ENCODE measurements at regions of chr10 and their contacts with region 1.

Region 1: DNA sequence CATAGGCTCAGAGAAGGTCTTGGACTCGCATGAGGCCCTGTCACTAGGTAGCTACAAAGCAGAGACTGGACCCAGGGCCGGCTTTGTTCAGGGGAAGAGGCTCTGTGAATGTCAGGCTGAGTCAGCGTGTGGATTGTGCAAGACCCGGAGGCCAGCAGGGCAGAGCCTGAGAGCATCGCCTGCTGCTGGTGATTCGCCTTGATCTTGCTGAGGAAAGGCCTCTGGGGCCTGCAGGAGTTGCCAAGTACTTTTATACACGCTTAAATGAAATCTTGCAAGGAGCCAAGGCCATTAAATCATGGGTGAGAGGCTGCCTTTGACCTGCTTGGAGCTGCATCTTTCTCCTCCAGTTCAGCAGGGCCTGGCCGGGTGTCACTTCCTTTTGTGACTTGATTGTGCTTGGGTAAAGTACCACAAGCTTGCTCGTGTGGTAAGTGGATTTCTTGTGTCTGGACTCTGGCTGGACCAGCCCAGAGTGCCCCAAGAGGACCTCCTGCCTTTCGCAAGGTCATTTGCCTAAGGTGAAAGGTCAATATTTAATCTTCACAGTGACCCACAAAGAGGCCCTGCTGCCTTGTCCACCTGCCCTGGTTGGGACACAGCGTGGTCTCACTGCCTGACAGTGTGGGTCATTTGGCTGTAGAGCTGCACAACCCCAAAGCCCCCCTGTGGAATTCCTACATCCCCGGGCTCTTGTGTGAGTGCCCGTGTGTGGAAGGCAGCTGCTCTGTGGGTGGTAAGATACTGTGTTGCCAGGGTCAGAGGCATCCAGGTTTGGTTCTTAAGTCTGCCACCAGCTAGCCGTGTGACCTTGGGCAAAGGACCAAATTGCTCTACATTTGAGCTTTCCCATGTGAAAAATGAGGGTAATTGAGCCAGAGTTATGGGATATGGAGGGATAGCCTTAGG is 38.6 kb upstream of the SH2D4B start:
- DNase-seq: peak in 1 of 5 donors; percentile 74
- H3K4me3 ChIP-seq: peak overlapping the region; percentile 1 to 22
- H3K4me3 Mint-ChIP-seq: peak overlapping the region; percentile 48 to 92 (median 81)
- H3K27ac ChIP-seq: peak overlapping the region; percentile 62
- H3K27ac Mint-ChIP-seq: peak overlapping the region; percentile 83 to 97 (median 95)
- H3K4me1 ChIP-seq: peaks cover 100% of the 10 kb centered on the region
- H3K4me1 Mint-ChIP-seq: peaks cover 90 to 100% (median 95%) of the 10 kb centered on the region in 4 donors
- H3K27me3 ChIP-seq: no peaks in the 10 kb centered on the region
- H3K27me3 Mint-ChIP-seq: no peaks in the 10 kb centered on the region

Region 2: GRCh38 chr10:80459047-80459931 is 39.8 kb before region 1 on chr10:
- CTCF ChIA-PET with region 1: interaction called, 814 read pairs
- POLR2A ChIA-PET with region 1: interaction called, 906 read pairs
- intact Hi-C with region 1: no loop called
- DNase-seq: peak; percentile 51 to 83 (median 66)
- H3K4me3 ChIP-seq: peak overlapping the region; percentile 67 to 76
- H3K4me3 Mint-ChIP-seq: peak overlapping the region; percentile 90 to 100 (median 98)
- H3K27ac ChIP-seq: peak overlapping the region; percentile 83
- H3K27ac Mint-ChIP-seq: peak overlapping the region; percentile 88 to 100 (median 96)
- H3K4me1 ChIP-seq: peaks cover 84% of the 10 kb centered on the region
- H3K4me1 Mint-ChIP-seq: peaks cover 71 to 93% (median 79%) of the 10 kb centered on the region in 4 donors
- H3K27me3 ChIP-seq: no peaks in the 10 kb centered on the region
- H3K27me3 Mint-ChIP-seq: no peaks in the 10 kb centered on the region

Region 3: DNA sequence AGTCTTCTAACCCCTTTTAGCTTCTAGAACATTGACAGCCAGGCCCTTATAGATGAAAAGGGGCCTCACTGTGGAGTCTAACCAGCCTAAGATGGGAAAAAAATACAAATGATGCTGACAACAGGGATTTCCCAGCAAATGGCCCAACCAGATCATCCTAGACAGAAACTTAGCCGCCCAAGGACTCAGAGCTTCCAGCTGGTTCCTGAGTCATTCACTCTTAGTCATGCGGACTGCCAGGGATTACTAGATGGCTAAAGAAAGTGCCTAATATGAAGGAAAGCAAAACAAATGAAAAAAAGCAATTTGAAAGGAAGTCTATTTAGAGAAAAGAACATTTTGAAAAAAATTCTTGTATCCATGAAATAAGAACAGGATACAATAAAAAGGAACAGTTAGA is 21.3 kb before region 1 on chr10:
- CTCF ChIA-PET with region 1: interaction called, 516 read pairs
- POLR2A ChIA-PET with region 1: interaction called, 906 read pairs
- intact Hi-C with region 1: no loop called
- DNase-seq: peak in 1 of 5 donors; percentile 47
- H3K4me3 ChIP-seq: no peak overlapping the region
- H3K4me3 Mint-ChIP-seq: peak overlapping the region in 4 of 8 donors; percentile 7 to 68 (median 54)
- H3K27ac ChIP-seq: no peak overlapping the region
- H3K27ac Mint-ChIP-seq: peak overlapping the region; percentile 61 to 91 (median 76)
- H3K4me1 ChIP-seq: peaks cover 79% of the 10 kb centered on the region
- H3K4me1 Mint-ChIP-seq: peaks cover 51 to 82% (median 69%) of the 10 kb centered on the region in 4 donors
- H3K27me3 ChIP-seq: no peaks in the 10 kb centered on the region
- H3K27me3 Mint-ChIP-seq: no peaks in the 10 kb centered on the region

Region 4: DNA sequence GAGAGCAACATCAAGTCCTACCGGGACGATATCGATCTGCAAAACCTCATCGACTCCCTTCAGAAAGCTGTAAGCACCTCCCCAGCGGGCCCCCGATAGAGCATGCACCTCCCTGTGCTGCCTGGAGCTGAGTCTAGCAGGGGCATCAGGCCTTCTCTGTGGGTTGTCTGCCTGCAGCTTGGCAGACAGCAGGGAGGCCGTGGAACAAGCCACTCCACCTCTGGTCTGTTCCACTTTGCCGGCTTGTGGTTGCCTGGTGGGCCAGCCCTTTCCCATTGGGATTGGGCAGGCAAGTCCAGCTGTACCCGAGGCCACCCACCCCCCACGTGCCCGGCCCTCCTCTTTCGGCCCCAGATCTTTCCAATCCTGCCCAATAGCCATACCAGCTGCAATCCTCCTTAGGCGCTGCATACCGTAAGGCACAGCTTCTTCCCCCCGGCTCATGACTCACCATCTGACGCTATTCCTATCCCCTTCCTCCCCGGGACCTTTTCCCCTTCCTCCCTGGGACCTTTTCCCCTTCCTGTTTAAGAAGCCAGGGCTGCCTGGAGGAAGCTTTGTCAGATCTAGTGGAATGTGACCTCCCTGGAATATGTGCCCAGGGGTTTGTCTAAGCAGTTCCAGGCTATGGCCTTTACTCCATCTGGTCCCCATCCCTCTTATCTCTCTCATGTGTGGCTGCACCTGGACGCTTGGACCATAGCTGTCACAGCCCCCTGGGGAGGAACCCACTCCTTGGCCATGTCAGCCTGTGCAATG is 10.5 kb after region 1 on chr10:
- CTCF ChIA-PET with region 1: interaction called, 201 read pairs
- POLR2A ChIA-PET with region 1: interaction called, 12 read pairs
- intact Hi-C with region 1: no loop called
- DNase-seq: no peak
- H3K4me3 ChIP-seq: no peak overlapping the region
- H3K4me3 Mint-ChIP-seq: peak overlapping the region in 1 of 8 donors; percentile 35
- H3K27ac ChIP-seq: no peak overlapping the region
- H3K27ac Mint-ChIP-seq: peak overlapping the region; percentile 6 to 95 (median 75)
- H3K4me1 ChIP-seq: peaks cover 23% of the 10 kb centered on the region
- H3K4me1 Mint-ChIP-seq: peaks cover 26 to 53% (median 39%) of the 10 kb centered on the region in 4 donors
- H3K27me3 ChIP-seq: no peaks in the 10 kb centered on the region
- H3K27me3 Mint-ChIP-seq: no peaks in the 10 kb centered on the region